B cell (primary cell): ENCODE measurements at regions of chr19 and their contacts with region 1.

Region 1: GRCh38 chr19:29610563-29611271 is 4.6 kb downstream of the POP4 start:
- DNase-seq: peak; percentile 95
- ATAC-seq: peak; percentile 83
- H3K4me3 ChIP-seq: no peak overlapping the region
- H3K4me3 Mint-ChIP-seq: no peak overlapping the region
- H3K27ac ChIP-seq: peak overlapping the region; percentile 85 to 91
- H3K27ac Mint-ChIP-seq: peak overlapping the region; percentile 83
- H3K4me1 ChIP-seq: peaks cover 15 to 27% of the 10 kb centered on the region in 2 donors
- H3K4me1 Mint-ChIP-seq: peaks cover 33% of the 10 kb centered on the region
- H3K27me3 ChIP-seq: no peaks in the 10 kb centered on the region
- H3K27me3 Mint-ChIP-seq: no peaks in the 10 kb centered on the region
- CTCF ChIP-seq: peak; percentile 88

Region 2: GRCh38 chr19:29587518-29587986 is 23.2 kb before region 1 on chr19:
- CTCF ChIA-PET with region 1: no interaction called
- POLR2A ChIA-PET with region 1: no interaction called
- intact Hi-C with region 1: no loop called
- DNase-seq: no peak
- ATAC-seq: no peak
- H3K4me3 ChIP-seq: no peak overlapping the region
- H3K4me3 Mint-ChIP-seq: no peak overlapping the region
- H3K27ac ChIP-seq: no peak overlapping the region
- H3K27ac Mint-ChIP-seq: no peak overlapping the region
- H3K4me1 ChIP-seq: no peaks in the 10 kb centered on the region
- H3K4me1 Mint-ChIP-seq: no peaks in the 10 kb centered on the region
- H3K27me3 ChIP-seq: peaks cover 0 to 30% (median 4%) of the 10 kb centered on the region in 4 experiments
- H3K27me3 Mint-ChIP-seq: peaks cover 28% of the 10 kb centered on the region
- CTCF ChIP-seq: no peak

Region 3: GRCh38 chr19:29665215-29665825 is 54.6 kb after region 1 on chr19 and contains the start of gene PLEKHF1:
- CTCF ChIA-PET with region 1: interaction called, 116 read pairs
- POLR2A ChIA-PET with region 1: interaction called, 12 read pairs
- intact Hi-C with region 1: loop called (anchors 1 kb)
- DNase-seq: peak; percentile 87
- ATAC-seq: peak; percentile 97
- H3K4me3 ChIP-seq: peak within 1 kb of the TSS; percentile 18 to 87 (median 75)
- H3K4me3 Mint-ChIP-seq: peak within 1 kb of the TSS; percentile 87
- H3K27ac ChIP-seq: peak within 1 kb of the TSS; percentile 18 to 79
- H3K27ac Mint-ChIP-seq: peak within 1 kb of the TSS; percentile 80
- H3K4me1 ChIP-seq: peaks cover 31 to 42% of the 10 kb centered on the region in 2 donors
- H3K4me1 Mint-ChIP-seq: peaks cover 32% of the 10 kb centered on the region
- H3K27me3 ChIP-seq: no peaks in the 10 kb centered on the region
- H3K27me3 Mint-ChIP-seq: no peaks in the 10 kb centered on the region
- CTCF ChIP-seq: no peak
- total RNA-seq, gene PLEKHF1: 5.5 and 6.4 TPM in 2 replicates

Region 4: DNA sequence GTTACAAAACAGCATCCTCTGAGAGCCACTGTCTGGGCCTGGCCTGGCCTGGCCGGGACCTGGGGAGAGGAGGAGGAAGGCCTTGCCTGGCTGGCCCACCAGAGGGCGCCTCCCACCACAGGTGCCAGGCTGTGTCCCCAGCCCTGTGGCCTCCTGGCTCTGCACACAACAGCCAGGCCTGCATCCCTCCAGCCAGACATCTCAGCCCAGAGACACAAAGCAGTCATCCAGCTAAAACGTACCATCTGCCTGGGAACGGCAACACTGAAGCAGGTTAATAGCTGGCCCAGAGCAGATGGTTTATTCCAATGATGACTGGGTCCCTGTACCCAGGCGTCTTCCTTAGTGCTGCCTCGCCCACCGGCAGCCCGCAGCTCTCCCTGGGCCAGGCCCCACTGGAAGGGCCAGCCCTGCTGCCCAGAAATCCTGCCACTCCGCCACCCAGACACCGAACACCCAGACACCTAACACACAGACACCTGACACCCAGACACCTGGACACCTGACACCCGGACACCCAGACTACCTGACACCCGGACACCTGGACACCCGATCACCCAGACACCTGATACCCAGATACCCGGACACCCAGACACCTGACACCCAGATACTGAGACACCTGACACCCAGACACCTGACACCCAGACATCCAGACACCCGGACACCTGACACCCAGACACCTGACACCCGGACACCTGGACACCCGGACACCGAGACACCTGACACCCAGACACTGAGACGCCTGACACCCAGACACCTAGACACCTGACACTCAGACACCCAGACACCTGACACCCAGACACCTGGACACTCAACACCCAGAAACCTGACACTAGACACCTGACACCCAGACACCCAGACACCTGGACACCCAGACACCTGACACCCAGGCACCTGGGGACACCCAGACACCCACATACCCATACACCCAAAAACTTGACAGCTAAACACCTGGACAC is 84.2 kb after region 1 on chr19:
- CTCF ChIA-PET with region 1: interaction called, 38 read pairs
- POLR2A ChIA-PET with region 1: interaction called, 4 read pairs
- intact Hi-C with region 1: loop called (anchors 1 kb)
- DNase-seq: peak; percentile 81
- ATAC-seq: peak; percentile 97
- H3K4me3 ChIP-seq: no peak overlapping the region
- H3K4me3 Mint-ChIP-seq: no peak overlapping the region
- H3K27ac ChIP-seq: peak overlapping the region in 1 of 2 donors; percentile 49
- H3K27ac Mint-ChIP-seq: peak overlapping the region; percentile 62
- H3K4me1 ChIP-seq: peaks cover 21 to 23% of the 10 kb centered on the region in 2 donors
- H3K4me1 Mint-ChIP-seq: peaks cover 22% of the 10 kb centered on the region
- H3K27me3 ChIP-seq: no peaks in the 10 kb centered on the region
- H3K27me3 Mint-ChIP-seq: no peaks in the 10 kb centered on the region
- CTCF ChIP-seq: peak; percentile 90

Region 5: DNA sequence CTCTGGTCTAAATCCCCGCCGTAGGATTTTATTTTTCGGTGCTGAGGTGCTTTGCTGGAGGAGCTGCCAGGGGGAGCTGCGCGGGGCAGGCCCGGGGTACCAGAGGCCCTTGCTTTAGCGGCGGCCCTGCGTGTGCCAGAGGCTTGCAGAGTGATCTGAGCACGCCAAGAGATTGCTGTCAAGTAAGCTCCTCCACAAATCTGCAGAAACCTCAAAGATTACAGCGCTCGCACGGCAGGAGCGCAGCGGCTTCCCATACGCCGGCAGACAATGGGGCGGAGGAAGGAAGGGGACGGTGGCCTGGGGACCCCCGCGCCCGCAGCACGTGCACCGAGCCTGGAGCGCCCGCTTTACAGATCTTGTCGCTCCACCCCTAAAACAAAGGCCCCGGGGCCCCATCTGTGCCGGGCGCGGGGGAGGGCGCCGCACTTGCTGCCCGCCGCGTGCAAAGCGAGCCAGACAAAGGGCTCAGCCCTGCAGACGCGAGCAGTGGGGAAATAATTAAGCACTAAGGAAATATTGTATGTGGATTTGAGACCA is 113.5 kb after region 1 on chr19:
- CTCF ChIA-PET with region 1: interaction called, 12 read pairs
- POLR2A ChIA-PET with region 1: no interaction called
- intact Hi-C with region 1: no loop called
- DNase-seq: peak; percentile 32
- ATAC-seq: no peak
- H3K4me3 ChIP-seq: peak overlapping the region in 2 of 5 experiments; percentile 9 to 10
- H3K4me3 Mint-ChIP-seq: peak overlapping the region; percentile 41
- H3K27ac ChIP-seq: no peak overlapping the region
- H3K27ac Mint-ChIP-seq: no peak overlapping the region
- H3K4me1 ChIP-seq: peaks cover 8 to 12% of the 10 kb centered on the region in 2 donors
- H3K4me1 Mint-ChIP-seq: peaks cover 8% of the 10 kb centered on the region
- H3K27me3 ChIP-seq: peaks cover 0 to 38% (median 15%) of the 10 kb centered on the region in 4 experiments
- H3K27me3 Mint-ChIP-seq: peaks cover 43% of the 10 kb centered on the region
- CTCF ChIP-seq: no peak

Region 6: GRCh38 chr19:29844891-29845572 is 234.3 kb after region 1 on chr19:
- CTCF ChIA-PET with region 1: interaction called, 3 read pairs
- POLR2A ChIA-PET with region 1: interaction called, 13 read pairs
- intact Hi-C with region 1: loop called (anchors 1 kb)
- DNase-seq: peak; percentile 96
- ATAC-seq: peak; percentile 78
- H3K4me3 ChIP-seq: peak overlapping the region; percentile 60 to 79 (median 71)
- H3K4me3 Mint-ChIP-seq: peak overlapping the region; percentile 97
- H3K27ac ChIP-seq: peak overlapping the region; percentile 48 to 68
- H3K27ac Mint-ChIP-seq: peak overlapping the region; percentile 96
- H3K4me1 ChIP-seq: peaks cover 21 to 28% of the 10 kb centered on the region in 2 donors
- H3K4me1 Mint-ChIP-seq: peaks cover 17% of the 10 kb centered on the region
- H3K27me3 ChIP-seq: peaks cover 0 to 26% (median 9%) of the 10 kb centered on the region in 4 experiments
- H3K27me3 Mint-ChIP-seq: peaks cover 23% of the 10 kb centered on the region
- CTCF ChIP-seq: no peak

Region 7: DNA sequence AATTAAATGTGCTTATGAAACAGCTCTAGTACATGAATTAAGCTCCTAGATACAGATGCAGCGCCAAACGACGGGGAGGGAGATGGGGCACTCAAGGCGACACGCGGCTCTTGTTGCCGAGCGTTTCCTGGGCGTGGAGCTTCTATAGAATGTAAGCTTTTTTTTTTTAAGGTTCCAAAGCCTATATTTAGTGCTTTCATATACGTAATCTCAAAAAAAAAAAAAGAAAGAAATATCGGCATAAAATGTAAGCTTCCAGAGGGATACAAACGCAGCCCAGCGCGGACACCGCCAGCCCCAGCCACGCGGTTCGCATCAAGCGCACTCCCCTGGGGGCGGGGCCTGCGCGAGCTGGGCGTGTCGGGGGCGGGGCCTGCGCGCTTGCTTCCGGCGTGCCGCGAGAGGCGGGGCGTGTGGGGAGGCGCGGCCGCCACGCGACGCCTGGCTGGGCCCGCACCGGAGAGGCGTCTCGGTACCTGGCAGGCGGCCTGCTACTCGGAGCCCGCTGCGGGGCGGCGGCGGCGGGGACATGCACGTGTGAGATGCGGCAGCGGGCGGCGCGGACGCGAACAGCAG is 331.2 kb after region 1 on chr19 and contains the start of gene URI1:
- CTCF ChIA-PET with region 1: interaction called, 4 read pairs
- POLR2A ChIA-PET with region 1: interaction called, 5 read pairs
- intact Hi-C with region 1: loop called (anchors 1 kb)
- DNase-seq: peak; percentile 92
- ATAC-seq: peak; percentile 92
- H3K4me3 ChIP-seq: peak within 1 kb of the TSS; percentile 59 to 96 (median 78)
- H3K4me3 Mint-ChIP-seq: peak within 1 kb of the TSS; percentile 97
- H3K27ac ChIP-seq: peak within 1 kb of the TSS; percentile 46 to 67
- H3K27ac Mint-ChIP-seq: peak within 1 kb of the TSS; percentile 94
- H3K4me1 ChIP-seq: peaks cover 19 to 30% of the 10 kb centered on the region in 2 donors
- H3K4me1 Mint-ChIP-seq: peaks cover 38% of the 10 kb centered on the region
- H3K27me3 ChIP-seq: peaks cover 0 to 3% (median 0%) of the 10 kb centered on the region in 4 experiments
- H3K27me3 Mint-ChIP-seq: peaks cover 9% of the 10 kb centered on the region
- CTCF ChIP-seq: no peak
- total RNA-seq, gene URI1: 54.2 and 58.0 TPM in 2 replicates